ENCODE measurements at regions of chr1 and their contacts with region 1.

Region 1: DNA sequence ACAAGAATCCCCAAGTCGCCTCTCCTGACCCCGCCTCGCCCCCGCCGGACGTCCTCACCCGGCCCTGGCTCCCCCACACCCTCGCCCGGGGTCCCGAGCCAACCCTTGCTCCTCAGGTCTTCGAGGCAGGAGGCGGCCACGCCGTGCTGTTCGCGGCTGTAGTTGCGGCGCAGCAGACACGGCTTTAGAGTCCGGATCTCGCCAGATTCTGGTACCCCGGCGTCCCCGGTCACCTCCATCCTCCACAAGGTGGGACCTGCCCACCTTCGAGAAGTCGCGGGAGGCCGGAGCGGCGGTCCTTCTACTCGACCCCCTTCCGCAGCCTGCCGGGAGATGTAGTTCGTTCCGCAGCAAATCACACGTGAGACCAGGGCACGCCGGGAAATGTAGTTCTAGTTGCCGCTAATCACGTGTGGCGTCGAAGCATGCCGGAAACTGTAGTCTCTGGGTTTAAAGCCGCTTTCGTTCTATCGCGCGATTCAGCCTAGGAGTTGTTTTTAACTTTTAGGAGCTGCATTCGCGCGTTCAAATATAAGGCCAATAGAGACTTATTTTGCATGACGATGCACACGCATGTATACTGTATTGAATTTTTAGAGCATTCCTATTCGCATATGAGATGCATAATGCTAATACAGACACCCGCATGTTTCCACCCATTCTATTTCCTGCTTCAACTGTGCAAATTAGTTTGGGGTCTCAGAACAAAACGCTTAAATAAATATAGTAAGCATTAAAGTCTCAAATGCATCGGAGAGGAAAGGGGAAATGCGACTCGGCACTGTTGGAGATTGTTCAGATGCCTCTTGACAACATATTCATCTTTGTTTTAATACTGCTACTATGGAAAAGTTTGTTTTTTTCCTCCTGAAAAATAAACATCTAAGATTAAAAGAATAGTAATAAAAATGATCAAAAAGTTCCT is at the start of gene DFFA:
- DNase-seq: peak; percentile 96
- H3K4me3 Mint-ChIP-seq: peak within 1 kb of the TSS; percentile 92
- H3K27ac Mint-ChIP-seq: peak within 1 kb of the TSS; percentile 82
- H3K4me1 Mint-ChIP-seq: peaks cover 31% of the 10 kb centered on the region
- H3K27me3 Mint-ChIP-seq: no peaks in the 10 kb centered on the region
- total RNA-seq, gene DFFA: 32.0 to 32.8 TPM

Region 2: GRCh38 chr1:10398734-10399623 is 73.5 kb before region 1 on chr1 and contains the start of gene PGD:
- CTCF ChIA-PET with region 1: no interaction called
- POLR2A ChIA-PET with region 1: no interaction called
- intact Hi-C with region 1: loop called (anchors 2 kb)
- DNase-seq: peak; percentile 99
- H3K4me3 Mint-ChIP-seq: peak within 1 kb of the TSS; percentile 88
- H3K27ac Mint-ChIP-seq: peak within 1 kb of the TSS; percentile 55
- H3K4me1 Mint-ChIP-seq: peaks cover 25% of the 10 kb centered on the region
- H3K27me3 Mint-ChIP-seq: no peaks in the 10 kb centered on the region
- total RNA-seq, gene PGD: 94.6 to 96.7 TPM

Region 3: DNA sequence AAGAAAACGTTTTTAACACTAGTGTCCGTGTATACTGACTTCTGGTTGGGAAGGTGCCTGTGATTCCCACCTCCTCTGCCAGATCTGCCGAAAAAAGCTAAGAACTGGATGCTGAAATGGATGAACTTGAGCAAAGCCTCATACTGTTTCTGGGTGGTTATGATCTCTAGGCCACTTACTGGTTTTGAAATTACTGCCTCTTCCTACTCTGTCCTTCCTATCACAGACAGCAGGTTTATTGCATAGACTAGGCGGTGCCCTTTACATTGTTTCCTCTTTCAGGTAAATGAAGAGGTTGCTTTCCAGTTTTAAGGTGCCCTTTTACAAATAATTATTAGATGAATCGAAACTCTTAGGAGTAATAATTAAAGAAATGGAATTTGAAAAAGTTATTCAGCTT is 29.7 kb after region 1 on chr1:
- CTCF ChIA-PET with region 1: no interaction called
- POLR2A ChIA-PET with region 1: no interaction called
- intact Hi-C with region 1: no loop called
- DNase-seq: no peak
- H3K4me3 Mint-ChIP-seq: no peak overlapping the region
- H3K27ac Mint-ChIP-seq: no peak overlapping the region
- H3K4me1 Mint-ChIP-seq: peaks cover 21% of the 10 kb centered on the region
- H3K27me3 Mint-ChIP-seq: no peaks in the 10 kb centered on the region

Region 4: GRCh38 chr1:10575616-10576015 is 103.1 kb after region 1 on chr1:
- CTCF ChIA-PET with region 1: no interaction called
- POLR2A ChIA-PET with region 1: no interaction called
- intact Hi-C with region 1: no loop called
- DNase-seq: no peak
- H3K4me3 Mint-ChIP-seq: no peak overlapping the region
- H3K27ac Mint-ChIP-seq: no peak overlapping the region
- H3K4me1 Mint-ChIP-seq: no peaks in the 10 kb centered on the region
- H3K27me3 Mint-ChIP-seq: no peaks in the 10 kb centered on the region

Measured in activated CD4-positive, alpha-beta memory T cell treated with anti-CD3 and anti-CD28 coated beads for 36 hours (primary cell).